ENCODE measurements at regions of chr13 and their contacts with region 1.

Region 1: DNA sequence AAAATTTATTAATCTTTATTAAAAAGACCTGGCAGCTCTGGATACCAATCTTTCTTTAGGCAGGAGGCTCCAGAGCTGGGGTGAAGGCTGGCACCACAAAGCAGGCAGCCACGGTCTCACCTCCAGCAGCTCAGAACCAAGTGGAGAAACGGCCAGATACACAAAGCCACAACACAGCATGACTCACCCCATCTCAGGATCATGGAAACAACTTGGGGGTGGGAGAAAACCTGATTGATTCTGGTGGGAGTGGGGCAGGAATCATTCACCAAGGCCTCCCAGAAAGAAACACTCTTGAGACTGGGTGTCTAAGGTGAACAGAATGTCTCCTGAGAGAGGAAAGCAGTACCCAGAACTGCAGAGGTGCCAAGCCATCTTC is 64.2 kb downstream of the CRYL1 start:
- DNase-seq: no peak
- H3K4me3 Mint-ChIP-seq: no peak overlapping the region
- H3K27ac Mint-ChIP-seq: peak overlapping the region; percentile 48
- H3K4me1 Mint-ChIP-seq: peaks cover 27% of the 10 kb centered on the region
- H3K27me3 Mint-ChIP-seq: no peaks in the 10 kb centered on the region

Region 2: DNA sequence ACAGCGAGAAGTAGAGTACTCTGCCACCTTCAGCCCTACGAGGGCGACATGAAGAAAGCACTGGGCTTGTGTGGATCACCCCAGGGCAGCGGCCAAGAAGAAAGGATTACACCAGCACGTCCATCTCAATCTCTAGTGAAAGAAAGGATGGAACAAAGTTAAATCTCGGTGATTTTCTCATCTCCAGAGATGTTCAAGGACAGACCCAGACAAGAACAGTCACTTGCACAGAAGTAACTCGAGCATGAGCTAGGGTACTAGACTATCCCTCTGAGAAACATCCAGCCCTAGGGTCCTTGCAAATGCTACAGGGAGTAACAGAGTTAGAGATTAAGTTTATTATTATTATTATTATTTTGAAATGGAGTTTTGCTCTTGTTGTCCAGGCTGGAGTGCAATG is 42.5 kb before region 1 on chr13:
- intact Hi-C with region 1: loop called (anchors 2 kb)
- DNase-seq: no peak
- H3K4me3 Mint-ChIP-seq: no peak overlapping the region
- H3K27ac Mint-ChIP-seq: no peak overlapping the region
- H3K4me1 Mint-ChIP-seq: peaks cover 38% of the 10 kb centered on the region
- H3K27me3 Mint-ChIP-seq: no peaks in the 10 kb centered on the region

Region 3: GRCh38 chr13:20512042-20512683 is 50.7 kb after region 1 on chr13:
- intact Hi-C with region 1: no loop called
- DNase-seq: no peak
- H3K4me3 Mint-ChIP-seq: no peak overlapping the region
- H3K27ac Mint-ChIP-seq: no peak overlapping the region
- H3K4me1 Mint-ChIP-seq: no peaks in the 10 kb centered on the region
- H3K27me3 Mint-ChIP-seq: no peaks in the 10 kb centered on the region

Region 4: DNA sequence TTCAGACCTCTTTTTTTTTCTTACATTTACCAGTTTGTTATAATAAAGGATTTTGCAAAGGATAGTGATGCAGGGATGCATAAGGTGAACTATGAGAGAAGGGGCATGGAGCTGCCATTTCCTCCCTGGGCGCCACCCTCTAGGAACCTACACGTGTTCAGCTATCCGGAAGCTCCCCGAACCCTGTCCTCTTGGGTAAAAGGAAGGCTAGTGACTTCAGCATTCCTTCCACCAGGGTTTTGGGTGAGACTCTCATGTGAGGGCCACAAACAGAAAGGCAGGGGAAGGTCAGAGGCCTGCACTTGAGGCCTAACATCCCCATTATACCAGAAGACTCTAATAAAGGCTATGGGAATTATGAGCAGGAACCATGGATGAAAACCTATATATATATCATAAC is 162.7 kb after region 1 on chr13:
- intact Hi-C with region 1: no loop called
- DNase-seq: no peak
- H3K4me3 Mint-ChIP-seq: no peak overlapping the region
- H3K27ac Mint-ChIP-seq: no peak overlapping the region
- H3K4me1 Mint-ChIP-seq: no peaks in the 10 kb centered on the region
- H3K27me3 Mint-ChIP-seq: no peaks in the 10 kb centered on the region

Measured in activated T-helper 2 cell treated with anti-CD3 and anti-CD28 coated beads, Interferon-gamma antibody, Interleukin-2, Interleukin-4, amounts not matched to agents 10 μg/mL and 5 μg/mL and 100 μg/mL, durations not matched to agents 14 hours and 24 hours and 36 hours (primary cell).